Mammary epithelial cell (primary cell): ENCODE measurements at regions of chr14 and their contacts with region 1.

Region 1: GRCh38 chr14:20970983-20971704 is 15.9 kb downstream of the RNASE2 start:
- DNase-seq: peak; percentile 74
- H3K4me3 ChIP-seq: peak overlapping the region; percentile 56 to 65 (median 61)
- H3K27ac ChIP-seq: peak overlapping the region; percentile 41
- H3K4me1 ChIP-seq: peaks cover 21% of the 10 kb centered on the region
- H3K27me3 ChIP-seq: no peaks in the 10 kb centered on the region
- CTCF ChIP-seq: peak; percentile 94 to 99

Region 2: GRCh38 chr14:20690848-20691523 is 280.2 kb before region 1 on chr14:
- CTCF ChIA-PET with region 1: interaction called, 3 read pairs
- dilution Hi-C with region 1: no loop called
- in situ Hi-C with region 1: loop called in 1 of 2 experiments (anchors 10 kb)
- intact Hi-C with region 1: no loop called
- DNase-seq: peak; percentile 65
- H3K4me3 ChIP-seq: no peak overlapping the region
- H3K27ac ChIP-seq: no peak overlapping the region
- H3K4me1 ChIP-seq: no peaks in the 10 kb centered on the region
- H3K27me3 ChIP-seq: no peaks in the 10 kb centered on the region
- CTCF ChIP-seq: peak; percentile 77 to 83

Region 3: DNA sequence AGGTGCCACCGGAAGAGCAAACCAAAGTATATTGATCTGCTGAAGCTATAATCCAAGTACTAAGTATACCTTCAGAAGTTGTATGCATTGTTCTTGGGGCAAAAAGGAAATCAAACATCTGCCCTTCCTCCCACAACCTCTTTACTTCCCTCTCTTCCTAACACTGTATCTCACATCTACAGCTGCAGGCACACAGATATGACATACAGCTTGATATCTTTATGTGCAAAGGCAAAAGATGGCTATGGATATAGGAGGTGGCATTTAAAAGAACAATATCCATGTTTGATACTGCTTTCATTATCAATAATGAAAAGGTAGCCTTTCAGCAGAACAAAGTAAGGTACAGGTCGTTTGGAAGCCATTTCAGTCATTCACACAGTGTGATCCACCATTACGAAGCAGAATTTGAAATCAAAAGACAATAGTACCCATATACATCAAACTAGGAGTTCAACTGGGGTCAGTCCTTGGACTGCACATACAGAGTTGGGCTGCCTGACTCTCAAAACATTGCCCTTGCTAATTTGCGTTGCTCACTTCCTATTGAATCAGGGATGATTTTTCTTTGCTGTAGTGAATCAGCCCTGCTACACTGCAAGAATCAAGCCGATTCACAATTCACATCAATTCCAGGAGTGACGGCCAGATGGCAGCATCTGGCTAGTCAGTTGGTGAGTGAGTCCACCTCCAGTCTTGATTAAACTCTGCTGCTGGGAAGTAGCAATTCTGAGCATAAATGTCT is 273.7 kb before region 1 on chr14:
- CTCF ChIA-PET with region 1: interaction called, 12 read pairs
- dilution Hi-C with region 1: no loop called
- in situ Hi-C with region 1: loop called in 1 of 2 experiments (anchors 10 kb)
- intact Hi-C with region 1: loop called (anchors 1 kb)
- DNase-seq: peak; percentile 69
- H3K4me3 ChIP-seq: no peak overlapping the region
- H3K27ac ChIP-seq: no peak overlapping the region
- H3K4me1 ChIP-seq: no peaks in the 10 kb centered on the region
- H3K27me3 ChIP-seq: no peaks in the 10 kb centered on the region
- CTCF ChIP-seq: peak; percentile 76 to 81

Region 4: GRCh38 chr14:20855652-20856291 is 115.4 kb before region 1 on chr14:
- CTCF ChIA-PET with region 1: interaction called, 7 read pairs
- dilution Hi-C with region 1: no loop called
- in situ Hi-C with region 1: loop called in 1 of 2 experiments (anchors 10 kb)
- intact Hi-C with region 1: loop called (anchors 1 kb)
- DNase-seq: peak; percentile 62
- H3K4me3 ChIP-seq: no peak overlapping the region
- H3K27ac ChIP-seq: no peak overlapping the region
- H3K4me1 ChIP-seq: peaks cover 4% of the 10 kb centered on the region
- H3K27me3 ChIP-seq: peaks cover 2% of the 10 kb centered on the region
- CTCF ChIP-seq: peak; percentile 59 to 76

Region 5: DNA sequence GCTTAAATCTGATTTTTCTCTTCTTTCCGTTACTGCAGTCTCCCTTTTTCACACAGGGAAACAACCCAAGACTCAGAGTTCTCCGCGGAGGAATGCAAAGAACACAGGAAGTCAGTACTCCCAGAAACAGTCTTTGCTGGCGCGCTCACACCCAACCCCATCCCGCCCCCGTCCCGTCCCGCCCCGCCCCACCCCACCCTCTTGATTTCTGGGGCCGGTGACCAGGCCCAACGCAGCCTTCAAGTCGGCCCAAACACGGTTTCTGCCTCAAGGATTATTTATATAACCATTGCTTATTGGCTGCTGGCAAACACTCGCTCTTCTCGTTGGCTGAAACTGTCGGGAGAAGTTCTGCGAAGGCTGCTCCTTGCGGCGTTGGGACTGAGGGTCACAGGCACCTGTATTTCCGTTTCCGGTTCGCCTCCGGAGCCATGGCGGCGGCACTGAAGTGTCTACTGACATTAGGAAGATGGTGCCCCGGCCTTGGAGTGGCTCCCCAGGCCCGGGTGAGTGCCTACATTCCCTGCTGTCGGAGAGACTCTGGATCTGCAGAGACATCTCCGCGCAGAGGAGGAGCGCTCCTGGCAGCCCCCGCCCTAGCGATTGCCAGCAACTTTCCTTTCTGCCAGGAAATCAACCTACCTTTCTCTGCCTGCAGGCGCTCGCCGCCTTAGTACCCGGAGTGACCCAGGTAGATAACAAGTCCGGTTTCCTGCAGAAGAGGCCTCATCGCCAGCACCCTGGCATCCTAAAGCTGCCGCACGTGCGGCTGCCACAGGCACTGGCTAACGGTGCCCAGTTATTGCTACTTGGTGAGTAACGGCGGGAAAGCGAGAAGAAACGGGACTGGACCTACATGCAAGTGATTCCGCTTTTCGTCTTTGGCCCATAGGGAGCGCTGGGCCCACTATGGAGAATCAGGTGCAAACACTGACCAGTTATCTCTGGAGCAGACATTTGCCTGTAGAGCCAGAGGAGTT is 18.7 kb after region 1 on chr14 and contains the start of gene METTL17:
- CTCF ChIA-PET with region 1: interaction called, 6 read pairs
- dilution Hi-C with region 1: no loop called
- in situ Hi-C with region 1: no loop called
- intact Hi-C with region 1: loop called (anchors 1 kb)
- DNase-seq: peak; percentile 97
- H3K4me3 ChIP-seq: peak within 1 kb of the TSS; percentile 88 to 99 (median 96)
- H3K27ac ChIP-seq: peak within 1 kb of the TSS; percentile 86
- H3K4me1 ChIP-seq: peaks cover 34% of the 10 kb centered on the region
- H3K27me3 ChIP-seq: no peaks in the 10 kb centered on the region
- CTCF ChIP-seq: peak; percentile 33 to 53
- total RNA-seq, gene METTL17: 44.6 to 47.8 TPM

Region 6: GRCh38 chr14:21003788-21004346 is 32.7 kb after region 1 on chr14:
- CTCF ChIA-PET with region 1: interaction called, 4 read pairs
- dilution Hi-C with region 1: no loop called
- in situ Hi-C with region 1: no loop called
- intact Hi-C with region 1: loop called (anchors 2 kb)
- DNase-seq: no peak
- H3K4me3 ChIP-seq: no peak overlapping the region
- H3K27ac ChIP-seq: no peak overlapping the region
- H3K4me1 ChIP-seq: peaks cover 5% of the 10 kb centered on the region
- H3K27me3 ChIP-seq: no peaks in the 10 kb centered on the region
- CTCF ChIP-seq: no peak